Activated CD8-positive, alpha-beta T cell treated with anti-CD3 and anti-CD28 coated beads for 36 hours (primary cell): ENCODE measurements at regions of chr3 and their contacts with region 1.

Region 1: GRCh38 chr3:49802719-49803464 is at the start of gene INKA1:
- DNase-seq: peak; percentile 92
- ATAC-seq: peak; percentile 82
- H3K4me3 Mint-ChIP-seq: peak within 1 kb of the TSS; percentile 78
- H3K27ac Mint-ChIP-seq: peak within 1 kb of the TSS; percentile 78
- H3K4me1 Mint-ChIP-seq: peaks cover 37% of the 10 kb centered on the region
- H3K27me3 Mint-ChIP-seq: peaks cover 2% of the 10 kb centered on the region
- CTCF ChIP-seq: peak; percentile 89
- total RNA-seq, gene INKA1: 1.8 to 2.8 TPM

Region 2: GRCh38 chr3:49133226-49133951 is 669.5 kb before region 1 on chr3:
- CTCF ChIA-PET with region 1: no interaction called
- POLR2A ChIA-PET with region 1: no interaction called
- intact Hi-C with region 1: no loop called
- DNase-seq: no peak
- ATAC-seq: peak; percentile 27
- H3K4me3 Mint-ChIP-seq: no peak overlapping the region
- H3K27ac Mint-ChIP-seq: no peak overlapping the region
- H3K4me1 Mint-ChIP-seq: no peaks in the 10 kb centered on the region
- H3K27me3 Mint-ChIP-seq: peaks cover 3% of the 10 kb centered on the region
- CTCF ChIP-seq: no peak

Region 3: DNA sequence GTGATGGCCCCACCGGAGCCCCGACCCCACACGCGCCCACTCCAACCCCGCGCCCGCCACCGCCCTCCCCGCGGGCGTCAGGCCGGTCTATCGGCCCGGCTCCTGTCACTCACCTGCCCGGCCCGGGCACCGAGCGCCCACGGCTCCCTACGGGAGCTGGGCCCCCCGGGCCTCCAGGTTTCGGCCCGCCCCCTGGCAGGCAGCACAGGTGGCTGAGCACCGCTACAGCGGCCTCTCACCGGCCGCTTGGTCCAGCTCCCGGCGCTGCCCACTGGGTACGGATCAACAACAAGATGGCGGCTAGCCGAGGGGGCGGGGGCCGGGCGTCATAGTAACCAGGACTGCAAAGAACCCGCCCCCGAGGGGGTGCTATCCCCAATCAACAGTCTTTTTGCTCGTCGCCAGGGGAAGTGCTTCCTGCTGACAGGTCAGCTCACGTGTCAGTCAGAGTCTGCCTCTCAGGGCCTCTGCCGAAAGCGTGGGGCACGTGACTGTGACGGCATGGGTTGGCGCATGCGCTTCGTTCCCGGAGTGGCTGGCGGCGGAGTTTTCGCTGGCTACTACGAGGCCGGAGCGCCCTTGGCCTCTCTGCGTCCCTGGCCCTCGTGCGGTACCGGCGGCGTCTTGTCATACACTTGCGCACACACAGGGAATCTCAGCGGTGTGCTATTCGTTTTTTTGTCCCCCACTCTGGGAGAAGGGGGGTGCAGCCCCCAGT is 16.5 kb before region 1 on chr3 and contains the start of gene IP6K1:
- CTCF ChIA-PET with region 1: interaction called, 30 read pairs
- POLR2A ChIA-PET with region 1: interaction called, 6 read pairs
- intact Hi-C with region 1: no loop called
- DNase-seq: peak; percentile 100
- ATAC-seq: peak; percentile 99
- H3K4me3 Mint-ChIP-seq: peak within 1 kb of the TSS; percentile 89
- H3K27ac Mint-ChIP-seq: peak within 1 kb of the TSS; percentile 96
- H3K4me1 Mint-ChIP-seq: peaks cover 35% of the 10 kb centered on the region
- H3K27me3 Mint-ChIP-seq: peaks cover 1% of the 10 kb centered on the region
- CTCF ChIP-seq: no peak
- total RNA-seq, gene IP6K1: 23.5 to 24.2 TPM

Region 4: GRCh38 chr3:49826016-49826415 is 23.1 kb after region 1 on chr3:
- CTCF ChIA-PET with region 1: interaction called, 412 read pairs
- POLR2A ChIA-PET with region 1: interaction called, 4 read pairs
- intact Hi-C with region 1: no loop called
- DNase-seq: no peak
- ATAC-seq: no peak
- H3K4me3 Mint-ChIP-seq: no peak overlapping the region
- H3K27ac Mint-ChIP-seq: no peak overlapping the region
- H3K4me1 Mint-ChIP-seq: no peaks in the 10 kb centered on the region
- H3K27me3 Mint-ChIP-seq: no peaks in the 10 kb centered on the region
- CTCF ChIP-seq: no peak

Region 5: GRCh38 chr3:49856181-49857005 is 53.5 kb after region 1 on chr3 and contains the start of gene TRAIP:
- CTCF ChIA-PET with region 1: interaction called, 11 read pairs
- POLR2A ChIA-PET with region 1: no interaction called
- intact Hi-C with region 1: no loop called
- DNase-seq: peak; percentile 96
- ATAC-seq: peak; percentile 99
- H3K4me3 Mint-ChIP-seq: peak within 1 kb of the TSS; percentile 98
- H3K27ac Mint-ChIP-seq: peak within 1 kb of the TSS; percentile 88
- H3K4me1 Mint-ChIP-seq: peaks cover 12% of the 10 kb centered on the region
- H3K27me3 Mint-ChIP-seq: no peaks in the 10 kb centered on the region
- CTCF ChIP-seq: no peak
- total RNA-seq, gene TRAIP: 23.2 to 25.1 TPM

Region 6: DNA sequence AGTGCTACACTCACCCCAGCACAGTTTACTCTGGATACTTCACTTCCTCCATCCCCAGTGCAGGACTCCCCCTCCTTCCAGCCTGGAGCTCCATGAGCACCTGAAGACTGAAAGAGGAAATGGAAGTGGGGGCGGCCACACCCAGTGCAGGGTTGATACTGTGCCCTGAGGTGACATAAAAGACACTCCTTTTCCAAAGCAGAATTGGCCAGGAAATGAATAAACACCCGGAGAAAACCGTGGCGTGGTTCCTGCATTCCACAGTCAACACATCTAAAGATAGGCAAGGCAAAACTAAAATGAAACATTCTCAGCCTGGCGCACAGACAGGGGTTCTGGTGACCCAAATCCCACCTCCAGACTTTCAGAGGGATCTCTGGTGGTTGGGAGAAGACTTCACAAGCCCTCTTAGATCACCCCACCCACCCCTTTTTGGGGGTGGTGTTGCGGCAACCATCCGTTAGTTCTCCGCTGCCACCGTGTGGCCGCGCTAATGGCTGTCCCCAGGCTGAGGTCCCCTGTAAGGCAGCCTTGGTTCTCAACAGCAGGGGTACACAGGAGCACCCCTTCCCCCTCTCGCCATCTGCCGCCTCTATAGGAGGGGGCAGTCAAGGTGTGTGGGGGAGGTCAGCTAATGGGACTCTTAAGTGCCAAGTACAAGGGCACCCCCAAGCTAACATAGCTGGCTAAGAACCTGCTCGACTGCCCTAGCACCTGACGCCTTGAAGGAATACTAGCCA is 103.3 kb after region 1 on chr3:
- CTCF ChIA-PET with region 1: interaction called, 12 read pairs
- POLR2A ChIA-PET with region 1: interaction called, 4 read pairs
- intact Hi-C with region 1: loop called (anchors 5 kb)
- DNase-seq: peak; percentile 79
- ATAC-seq: peak; percentile 38
- H3K4me3 Mint-ChIP-seq: no peak overlapping the region
- H3K27ac Mint-ChIP-seq: peak overlapping the region; percentile 52
- H3K4me1 Mint-ChIP-seq: peaks cover 20% of the 10 kb centered on the region
- H3K27me3 Mint-ChIP-seq: no peaks in the 10 kb centered on the region
- CTCF ChIP-seq: peak; percentile 71